ENCODE measurements at regions of chr6 and their contacts with region 1.

Region 1: DNA sequence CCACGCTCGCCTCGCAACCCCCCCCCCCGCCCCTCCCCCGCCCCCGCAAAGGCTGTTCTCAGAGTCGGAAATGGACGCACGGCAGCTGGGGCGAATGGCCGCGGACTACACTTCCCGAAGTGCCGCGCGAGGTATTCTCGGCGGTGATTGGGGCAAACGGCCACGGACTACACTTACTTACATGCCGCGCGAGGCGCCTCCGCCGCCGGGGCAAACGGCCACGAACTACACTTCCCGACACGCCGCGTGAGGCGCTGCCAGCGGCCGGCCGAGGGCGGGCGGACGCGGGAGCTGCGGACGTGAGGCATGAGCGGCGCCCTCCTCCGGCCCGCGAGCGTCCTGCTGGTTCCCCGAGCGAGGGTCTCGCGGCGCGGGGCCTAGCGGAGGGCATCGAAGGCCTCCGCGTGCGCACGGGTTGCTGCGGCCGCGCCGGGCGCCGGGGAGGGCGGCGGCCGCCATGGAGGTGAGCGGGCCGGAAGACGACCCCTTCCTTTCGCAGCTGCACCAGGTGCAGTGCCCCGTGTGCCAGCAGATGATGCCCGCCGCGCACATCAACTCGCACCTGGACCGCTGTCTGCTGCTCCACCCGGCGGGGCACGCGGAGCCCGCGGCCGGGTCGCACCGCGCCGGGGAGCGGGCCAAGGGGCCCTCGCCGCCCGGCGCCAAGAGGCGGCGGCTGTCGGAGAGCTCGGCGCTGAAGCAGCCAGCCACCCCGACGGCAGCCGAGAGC is at the start of gene WRNIP1:
- DNase-seq: peak; percentile 92
- ATAC-seq: peak; percentile 89
- H3K4me3 Mint-ChIP-seq: peak within 1 kb of the TSS; percentile 93
- H3K27ac Mint-ChIP-seq: peak within 1 kb of the TSS; percentile 99
- H3K4me1 Mint-ChIP-seq: peaks cover 39% of the 10 kb centered on the region
- H3K27me3 Mint-ChIP-seq: no peaks in the 10 kb centered on the region
- CTCF ChIP-seq: no peak
- total RNA-seq, gene WRNIP1: 31.6 and 31.9 TPM in 2 replicates

Region 2: GRCh38 chr6:2245094-2245876 is 520.0 kb before region 1 on chr6 and contains the start of gene GMDS:
- CTCF ChIA-PET with region 1: no interaction called
- POLR2A ChIA-PET with region 1: no interaction called
- intact Hi-C with region 1: loop called (anchors 2 kb)
- DNase-seq: peak; percentile 83
- ATAC-seq: peak; percentile 96
- H3K4me3 Mint-ChIP-seq: peak within 1 kb of the TSS; percentile 93
- H3K27ac Mint-ChIP-seq: peak within 1 kb of the TSS; percentile 89
- H3K4me1 Mint-ChIP-seq: peaks cover 32% of the 10 kb centered on the region
- H3K27me3 Mint-ChIP-seq: no peaks in the 10 kb centered on the region
- CTCF ChIP-seq: no peak
- total RNA-seq, gene GMDS: 30.1 and 33.7 TPM in 2 replicates

Region 3: DNA sequence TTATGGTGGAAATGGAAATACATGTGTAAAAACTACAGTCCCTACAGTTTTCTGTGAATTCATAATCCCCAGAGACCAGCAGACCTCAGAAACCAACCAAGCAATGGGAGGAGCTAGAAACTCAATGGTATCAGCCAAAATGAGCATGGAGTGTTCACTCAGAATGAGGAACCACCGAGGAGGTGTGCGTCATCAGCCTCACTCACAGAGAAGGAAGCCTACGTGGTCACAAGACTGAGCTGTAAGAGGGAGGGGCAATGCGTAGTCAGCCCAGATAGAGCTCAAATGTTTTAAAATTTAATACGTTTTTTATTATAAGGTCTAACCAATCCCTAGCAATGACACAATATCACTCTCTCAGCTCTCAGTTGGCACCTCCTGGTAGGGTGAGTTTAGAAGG is 32.0 kb before region 1 on chr6:
- CTCF ChIA-PET with region 1: interaction called, 7 read pairs
- POLR2A ChIA-PET with region 1: interaction called, 12 read pairs
- intact Hi-C with region 1: loop called (anchors 1 kb)
- DNase-seq: peak; percentile 52
- ATAC-seq: peak; percentile 99
- H3K4me3 Mint-ChIP-seq: peak overlapping the region; percentile 24
- H3K27ac Mint-ChIP-seq: peak overlapping the region; percentile 85
- H3K4me1 Mint-ChIP-seq: peaks cover 19% of the 10 kb centered on the region
- H3K27me3 Mint-ChIP-seq: no peaks in the 10 kb centered on the region
- CTCF ChIP-seq: no peak

Region 4: DNA sequence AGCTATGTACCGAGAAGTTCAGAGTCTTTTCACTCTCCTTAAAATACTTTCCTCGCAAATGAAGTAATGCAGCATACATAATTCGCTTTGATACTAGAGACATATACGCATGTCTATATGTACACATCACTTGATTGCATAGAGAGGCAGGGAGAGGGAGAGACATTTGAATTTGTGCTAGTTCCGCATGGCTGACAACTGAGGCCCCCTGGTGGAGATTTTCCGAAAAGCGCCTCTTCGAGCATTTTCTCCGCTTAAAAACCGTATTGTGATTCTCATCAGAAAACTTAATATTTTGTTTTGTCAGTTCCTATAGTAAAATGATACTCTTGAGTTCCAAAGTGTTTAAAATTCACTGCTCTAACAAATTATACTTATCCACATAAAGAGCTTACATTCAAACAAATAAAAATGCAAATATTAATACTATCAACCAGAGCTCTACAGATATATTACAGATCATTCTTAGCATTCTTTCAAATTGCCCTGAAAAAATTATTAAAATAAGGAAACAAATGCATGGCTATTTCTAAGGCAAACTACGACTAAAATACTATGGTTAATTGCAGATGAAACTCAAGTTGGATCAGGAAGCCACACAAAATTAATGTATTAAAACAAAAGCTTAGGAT is 15.2 kb before region 1 on chr6:
- CTCF ChIA-PET with region 1: interaction called, 31 read pairs
- POLR2A ChIA-PET with region 1: interaction called, 4 read pairs
- intact Hi-C with region 1: no loop called
- DNase-seq: peak; percentile 53
- ATAC-seq: peak; percentile 76
- H3K4me3 Mint-ChIP-seq: no peak overlapping the region
- H3K27ac Mint-ChIP-seq: no peak overlapping the region
- H3K4me1 Mint-ChIP-seq: peaks cover 13% of the 10 kb centered on the region
- H3K27me3 Mint-ChIP-seq: peaks cover 14% of the 10 kb centered on the region
- CTCF ChIP-seq: peak; percentile 79

Region 5: GRCh38 chr6:2791124-2791974 is 26.0 kb after region 1 on chr6:
- CTCF ChIA-PET with region 1: interaction called, 13 read pairs
- POLR2A ChIA-PET with region 1: interaction called, 10 read pairs
- intact Hi-C with region 1: no loop called
- DNase-seq: no peak
- ATAC-seq: peak; percentile 91
- H3K4me3 Mint-ChIP-seq: peak overlapping the region; percentile 72
- H3K27ac Mint-ChIP-seq: peak overlapping the region; percentile 67
- H3K4me1 Mint-ChIP-seq: peaks cover 41% of the 10 kb centered on the region
- H3K27me3 Mint-ChIP-seq: no peaks in the 10 kb centered on the region
- CTCF ChIP-seq: no peak

Region 6: DNA sequence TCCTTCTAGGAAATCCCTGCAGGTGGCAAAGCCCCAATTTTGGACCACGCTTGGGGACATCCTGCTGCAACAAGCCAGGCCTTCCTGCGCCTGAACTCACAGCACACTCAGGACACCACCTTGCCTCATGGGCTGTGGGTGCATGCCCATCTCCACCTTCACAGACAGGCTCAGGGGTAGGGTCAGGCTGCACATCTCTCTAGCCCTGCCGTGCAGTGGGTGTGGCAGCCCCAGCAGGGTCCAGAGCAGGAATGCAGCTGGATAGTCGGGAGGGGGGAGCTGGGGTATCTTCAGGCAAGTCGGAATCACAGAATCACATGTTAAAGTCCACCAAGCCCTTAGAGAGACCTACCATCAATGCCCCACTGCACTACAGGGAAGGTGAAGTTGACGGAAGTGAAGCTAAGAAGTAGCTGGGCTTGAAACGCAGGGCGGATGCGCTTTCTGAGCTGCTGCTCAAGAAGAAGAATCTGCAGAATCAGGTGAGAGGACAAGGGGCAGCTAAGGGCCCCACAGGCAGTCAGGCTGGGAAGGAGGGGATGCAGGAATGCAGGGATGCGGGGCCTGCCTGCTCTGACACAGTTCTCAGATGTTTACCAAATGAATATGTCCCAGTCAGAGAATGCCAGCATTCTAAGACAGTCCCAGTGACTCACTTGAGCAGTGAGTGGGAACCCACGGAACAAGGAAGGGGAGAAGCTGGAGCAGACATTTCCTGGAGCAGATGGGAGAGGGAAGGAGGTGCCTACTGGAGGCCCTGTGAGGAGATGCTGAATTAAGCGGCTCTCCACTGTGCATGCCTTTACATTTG is 194.8 kb after region 1 on chr6:
- CTCF ChIA-PET with region 1: no interaction called
- POLR2A ChIA-PET with region 1: no interaction called
- intact Hi-C with region 1: no loop called
- DNase-seq: no peak
- ATAC-seq: no peak
- H3K4me3 Mint-ChIP-seq: no peak overlapping the region
- H3K27ac Mint-ChIP-seq: no peak overlapping the region
- H3K4me1 Mint-ChIP-seq: peaks cover 24% of the 10 kb centered on the region
- H3K27me3 Mint-ChIP-seq: no peaks in the 10 kb centered on the region
- CTCF ChIP-seq: no peak

Region 7: GRCh38 chr6:3023663-3024483 is 258.5 kb after region 1 on chr6:
- CTCF ChIA-PET with region 1: no interaction called
- POLR2A ChIA-PET with region 1: interaction called, 4 read pairs
- intact Hi-C with region 1: loop called (anchors 1 kb)
- DNase-seq: peak; percentile 76
- ATAC-seq: peak; percentile 82
- H3K4me3 Mint-ChIP-seq: peak overlapping the region; percentile 90
- H3K27ac Mint-ChIP-seq: peak overlapping the region; percentile 88
- H3K4me1 Mint-ChIP-seq: peaks cover 54% of the 10 kb centered on the region
- H3K27me3 Mint-ChIP-seq: no peaks in the 10 kb centered on the region
- CTCF ChIP-seq: no peak

Region 8: DNA sequence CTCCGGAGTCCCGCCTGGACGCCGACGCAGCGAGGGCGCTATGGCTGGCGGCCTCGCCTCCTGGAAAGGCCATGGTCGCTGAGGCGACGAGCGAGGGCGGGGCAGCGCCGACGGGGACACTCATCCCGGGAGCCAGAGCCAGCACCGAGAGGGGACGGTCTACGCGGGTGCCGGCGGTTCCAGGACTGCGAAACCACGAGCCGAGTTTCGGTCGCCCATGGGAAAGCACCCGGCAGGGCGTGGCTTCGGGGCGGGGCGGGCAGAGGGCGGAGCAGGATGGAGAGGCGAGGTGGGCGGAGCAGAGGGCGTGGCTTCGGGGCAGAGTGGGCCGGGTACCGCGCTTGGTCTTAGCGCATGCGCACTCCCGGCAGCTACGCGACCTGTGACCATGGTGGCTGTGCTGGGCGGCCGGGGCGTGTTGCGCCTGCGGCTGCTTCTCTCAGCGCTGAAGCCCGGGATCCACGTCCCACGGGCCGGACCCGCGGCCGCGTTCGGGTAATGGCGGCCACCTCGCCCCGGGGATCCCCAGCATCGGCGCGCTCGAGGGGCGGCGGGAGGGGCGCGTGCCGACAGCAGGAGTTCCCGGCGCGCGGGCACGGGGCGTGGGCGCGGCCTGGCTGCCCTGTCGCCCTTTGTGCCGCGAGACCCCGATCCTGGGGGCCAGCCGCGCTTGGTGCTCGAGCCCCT is 353.2 kb after region 1 on chr6 and contains the start of gene BPHL:
- CTCF ChIA-PET with region 1: no interaction called
- POLR2A ChIA-PET with region 1: interaction called, 4 read pairs
- intact Hi-C with region 1: loop called (anchors 1 kb)
- DNase-seq: peak; percentile 100
- ATAC-seq: peak; percentile 92
- H3K4me3 Mint-ChIP-seq: peak within 1 kb of the TSS; percentile 89
- H3K27ac Mint-ChIP-seq: peak within 1 kb of the TSS; percentile 93
- H3K4me1 Mint-ChIP-seq: peaks cover 16% of the 10 kb centered on the region
- H3K27me3 Mint-ChIP-seq: no peaks in the 10 kb centered on the region
- CTCF ChIP-seq: no peak
- total RNA-seq, gene BPHL: 10.5 and 11.0 TPM in 2 replicates